ENCODE measurements at regions of chr22 and their contacts with region 1.

Region 1: DNA sequence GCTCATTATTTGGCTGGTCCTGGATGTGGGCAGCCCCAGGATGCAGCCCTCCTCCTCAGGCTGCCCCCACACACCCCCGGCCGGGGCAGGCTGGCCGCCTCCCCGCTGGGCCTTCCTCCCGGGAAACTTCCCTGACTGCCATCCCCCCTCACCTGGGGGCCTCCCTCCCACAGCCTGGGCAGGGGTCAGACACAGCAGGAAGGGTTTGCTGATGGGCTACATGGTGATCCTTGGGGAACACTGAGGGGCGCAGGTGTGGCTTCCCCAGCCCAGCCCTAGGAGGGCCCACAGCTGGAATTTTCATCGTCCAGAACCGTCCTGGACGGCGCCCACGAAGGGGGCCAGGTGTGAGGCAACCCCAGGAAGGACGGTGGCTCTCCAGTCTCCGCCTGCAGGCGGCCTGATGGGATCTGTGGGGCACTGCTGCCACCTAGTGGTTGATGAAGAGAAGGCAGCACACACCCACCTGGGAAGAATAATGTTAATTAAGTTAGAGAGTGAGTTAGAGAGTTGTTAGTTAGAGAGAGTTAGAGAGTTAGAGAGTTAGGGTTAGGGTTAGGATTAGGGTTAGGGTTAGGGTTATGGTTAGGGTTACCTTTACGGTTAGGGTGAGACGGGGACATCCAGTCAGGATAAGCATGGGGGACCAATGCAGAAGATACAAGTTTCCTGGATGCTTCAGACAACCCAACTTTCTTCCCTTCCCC is 75.9 kb upstream of the PRR5 start:
- DNase-seq: peak; percentile 72 to 91 (median 81)
- ATAC-seq: peak; percentile 90
- H3K4me3 ChIP-seq: no peak overlapping the region
- H3K4me3 Mint-ChIP-seq: no peak overlapping the region
- H3K27ac ChIP-seq: no peak overlapping the region
- H3K27ac Mint-ChIP-seq: no peak overlapping the region
- H3K4me1 ChIP-seq: peaks cover 6% of the 10 kb centered on the region
- H3K4me1 Mint-ChIP-seq: peaks cover 5% of the 10 kb centered on the region
- H3K27me3 ChIP-seq: no peaks in the 10 kb centered on the region
- H3K27me3 Mint-ChIP-seq: no peaks in the 10 kb centered on the region
- CTCF ChIP-seq: peak; percentile 97

Region 2: GRCh38 chr22:43230971-43231723 is 1395.0 kb before region 1 on chr22:
- CTCF ChIA-PET with region 1: interaction called, 7 read pairs
- POLR2A ChIA-PET with region 1: no interaction called
- intact Hi-C with region 1: loop called in 1 of 2 experiments (anchors 2 kb)
- DNase-seq: peak; percentile 44 to 79 (median 66)
- ATAC-seq: peak; percentile 84
- H3K4me3 ChIP-seq: no peak overlapping the region
- H3K4me3 Mint-ChIP-seq: no peak overlapping the region
- H3K27ac ChIP-seq: no peak overlapping the region
- H3K27ac Mint-ChIP-seq: no peak overlapping the region
- H3K4me1 ChIP-seq: no peaks in the 10 kb centered on the region
- H3K4me1 Mint-ChIP-seq: peaks cover 5% of the 10 kb centered on the region
- H3K27me3 ChIP-seq: no peaks in the 10 kb centered on the region
- H3K27me3 Mint-ChIP-seq: no peaks in the 10 kb centered on the region
- CTCF ChIP-seq: peak; percentile 99

Region 3: GRCh38 chr22:43812149-43812842 is 813.8 kb before region 1 on chr22 and contains the start of gene EFCAB6:
- CTCF ChIA-PET with region 1: no interaction called
- POLR2A ChIA-PET with region 1: no interaction called
- intact Hi-C with region 1: loop called in 1 of 2 experiments (anchors 10 kb)
- DNase-seq: peak; percentile 69 to 96 (median 90)
- ATAC-seq: peak; percentile 91
- H3K4me3 ChIP-seq: peak within 1 kb of the TSS; percentile 84 to 92
- H3K4me3 Mint-ChIP-seq: peak within 1 kb of the TSS; percentile 95
- H3K27ac ChIP-seq: peak within 1 kb of the TSS; percentile 46 to 78
- H3K27ac Mint-ChIP-seq: peak within 1 kb of the TSS; percentile 85
- H3K4me1 ChIP-seq: peaks cover 15% of the 10 kb centered on the region
- H3K4me1 Mint-ChIP-seq: peaks cover 27% of the 10 kb centered on the region
- H3K27me3 ChIP-seq: no peaks in the 10 kb centered on the region
- H3K27me3 Mint-ChIP-seq: peaks cover 2% of the 10 kb centered on the region
- CTCF ChIP-seq: no peak
- total RNA-seq, gene EFCAB6: 0.22 TPM in 1 of 2 experiments, not detected in the other

Region 4: GRCh38 chr22:44567846-44568493 is 58.2 kb before region 1 on chr22:
- CTCF ChIA-PET with region 1: interaction called, 11 read pairs
- POLR2A ChIA-PET with region 1: no interaction called
- intact Hi-C with region 1: loop called in 1 of 2 experiments (anchors 5 kb)
- DNase-seq: peak; percentile 16 to 72 (median 57)
- ATAC-seq: no peak
- H3K4me3 ChIP-seq: no peak overlapping the region
- H3K4me3 Mint-ChIP-seq: no peak overlapping the region
- H3K27ac ChIP-seq: no peak overlapping the region
- H3K27ac Mint-ChIP-seq: no peak overlapping the region
- H3K4me1 ChIP-seq: no peaks in the 10 kb centered on the region
- H3K4me1 Mint-ChIP-seq: no peaks in the 10 kb centered on the region
- H3K27me3 ChIP-seq: no peaks in the 10 kb centered on the region
- H3K27me3 Mint-ChIP-seq: peaks cover 7% of the 10 kb centered on the region
- CTCF ChIP-seq: peak; percentile 49

Region 5: GRCh38 chr22:44664149-44664548 is 38.0 kb after region 1 on chr22:
- CTCF ChIA-PET with region 1: interaction called, 12 read pairs
- POLR2A ChIA-PET with region 1: interaction called, 3 read pairs
- intact Hi-C with region 1: loop called (anchors 2 kb)
- DNase-seq: peak in 8 of 9 experiments; percentile 47 to 83 (median 62)
- ATAC-seq: no peak
- H3K4me3 ChIP-seq: no peak overlapping the region
- H3K4me3 Mint-ChIP-seq: peak overlapping the region; percentile 50
- H3K27ac ChIP-seq: peak overlapping the region; percentile 10 to 70
- H3K27ac Mint-ChIP-seq: peak overlapping the region; percentile 90
- H3K4me1 ChIP-seq: peaks cover 65% of the 10 kb centered on the region
- H3K4me1 Mint-ChIP-seq: peaks cover 58% of the 10 kb centered on the region
- H3K27me3 ChIP-seq: no peaks in the 10 kb centered on the region
- H3K27me3 Mint-ChIP-seq: no peaks in the 10 kb centered on the region
- CTCF ChIP-seq: no peak

Measured in CD8-positive, alpha-beta T cell (primary cell).